ENCODE measurements at regions of chr2 and their contacts with region 1.

Region 1: GRCh38 chr2:171703574-171704347 is 16.5 kb downstream of the DYNC1I2 start:
- DNase-seq: no peak
- H3K4me3 ChIP-seq: no peak overlapping the region
- H3K27ac ChIP-seq: no peak overlapping the region
- H3K4me1 ChIP-seq: no peaks in the 10 kb centered on the region; a peak in 1 of 7 replicates
- H3K27me3 ChIP-seq: no peaks in the 10 kb centered on the region
- CTCF ChIP-seq: peak in 2 of 3 experiments; percentile 39 to 42; a peak in 2 of 4 replicates
- EP300 ChIP-seq: no peak
- POLR2A ChIP-seq: no peak
- RAD21 ChIP-seq: peak; percentile 68 to 71

Region 2: GRCh38 chr2:171687287-171688128 is 16.3 kb before region 1 on chr2 and contains the start of gene DYNC1I2:
- CTCF ChIA-PET with region 1: interaction called, 18 read pairs
- POLR2A ChIA-PET with region 1: no interaction called
- DNase-seq: peak; percentile 84 to 88
- H3K4me3 ChIP-seq: peak within 1 kb of the TSS; percentile 81 to 97 (median 94)
- H3K27ac ChIP-seq: peak within 1 kb of the TSS; percentile 22; the same call in 1 of the 2 replicates
- H3K4me1 ChIP-seq: no peaks in the 10 kb centered on the region; a peak in 1 of 7 replicates
- H3K27me3 ChIP-seq: no peaks in the 10 kb centered on the region
- CTCF ChIP-seq: no peak
- EP300 ChIP-seq: no peak
- POLR2A ChIP-seq: peak in 1 of 2 experiments; percentile 70; a peak in 2 of 3 replicates
- RAD21 ChIP-seq: no peak
- total RNA-seq, gene DYNC1I2: 65.6 and 68.1 TPM in 2 replicates

Region 3: DNA sequence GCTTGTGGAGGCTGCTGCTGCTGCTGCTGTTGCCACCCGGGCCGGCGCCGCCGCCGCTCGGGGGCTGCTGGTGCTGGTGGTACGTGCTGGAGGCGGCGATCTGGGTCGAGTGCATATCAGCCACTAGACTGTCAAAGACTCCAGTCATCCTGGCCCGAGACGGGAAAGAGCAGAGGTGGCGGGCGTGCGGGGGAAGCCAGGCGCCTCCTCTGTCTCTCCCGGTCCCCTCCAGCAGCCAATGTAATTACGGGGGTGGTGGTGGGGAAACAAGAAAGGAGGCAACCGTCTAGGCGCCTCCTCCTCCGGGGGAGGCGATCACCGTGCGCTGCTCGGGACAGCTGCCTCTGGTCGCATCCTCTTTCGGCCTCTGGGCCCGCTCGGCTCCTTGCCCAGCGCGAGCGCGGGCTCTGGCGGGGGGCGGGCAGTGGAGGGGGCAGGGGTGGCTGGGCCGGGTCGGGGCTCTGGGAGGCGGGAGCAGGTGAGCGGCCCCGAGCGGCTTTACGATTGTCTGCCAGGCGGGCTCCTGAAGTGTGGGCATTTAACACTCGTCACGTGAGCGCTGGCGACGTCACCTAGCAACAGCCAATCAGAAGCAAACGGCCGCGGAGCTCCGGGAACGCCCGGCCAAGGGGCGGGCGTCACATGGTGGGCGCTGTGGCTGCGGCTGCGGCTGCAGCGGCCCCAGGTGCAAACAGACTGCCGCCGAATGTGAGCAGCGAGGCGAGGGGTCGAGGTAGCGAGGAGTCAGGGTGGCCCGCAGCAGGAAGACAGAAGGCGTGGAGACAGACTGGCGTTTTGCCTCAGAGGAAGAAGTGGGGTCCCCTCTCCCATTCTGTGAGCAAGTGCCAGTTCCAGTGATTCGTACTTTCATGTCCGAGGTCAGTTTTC is 398.9 kb after region 1 on chr2 and contains the start of gene DLX2:
- CTCF ChIA-PET with region 1: interaction called, 64 read pairs
- POLR2A ChIA-PET with region 1: no interaction called
- DNase-seq: peak; percentile 86 to 92
- H3K4me3 ChIP-seq: peak within 1 kb of the TSS; percentile 33 to 59 (median 46)
- H3K27ac ChIP-seq: no peak within 1 kb of the TSS
- H3K4me1 ChIP-seq: peaks cover 6 to 43% (median 21%) of the 10 kb centered on the region in 4 experiments
- H3K27me3 ChIP-seq: peaks cover 78 to 100% (median 93%) of the 10 kb centered on the region in 4 experiments
- CTCF ChIP-seq: no peak
- EP300 ChIP-seq: no peak
- POLR2A ChIP-seq: no peak
- RAD21 ChIP-seq: no peak
- total RNA-seq, gene DLX2: 0.13 and 0.45 TPM in 2 replicates

Region 4: GRCh38 chr2:172113617-172114016 is 409.9 kb after region 1 on chr2:
- CTCF ChIA-PET with region 1: interaction called, 64 read pairs
- POLR2A ChIA-PET with region 1: no interaction called
- DNase-seq: no peak
- H3K4me3 ChIP-seq: no peak overlapping the region
- H3K27ac ChIP-seq: no peak overlapping the region
- H3K4me1 ChIP-seq: peaks cover 4 to 11% (median 6%) of the 10 kb centered on the region in 4 experiments; a peak in 5 of 7 replicates
- H3K27me3 ChIP-seq: peaks cover 18 to 34% (median 28%) of the 10 kb centered on the region in 4 experiments
- CTCF ChIP-seq: peak in 2 of 3 experiments; percentile 42 to 46; a peak in 3 of 4 replicates
- EP300 ChIP-seq: no peak
- POLR2A ChIP-seq: no peak
- RAD21 ChIP-seq: peak; percentile 77 to 83